ENCODE measurements at regions of chr16 and their contacts with region 1.

Region 1: GRCh38 chr16:27920391-27920891 is 143.1 kb downstream of the GSG1L start:
- DNase-seq: peak; percentile 52
- H3K4me3 ChIP-seq: no peak overlapping the region
- H3K27ac ChIP-seq: no peak overlapping the region
- H3K4me1 ChIP-seq: peaks cover 8% of the 10 kb centered on the region
- H3K27me3 ChIP-seq: no peaks in the 10 kb centered on the region
- CTCF ChIP-seq: peak; percentile 59 to 66

Region 2: DNA sequence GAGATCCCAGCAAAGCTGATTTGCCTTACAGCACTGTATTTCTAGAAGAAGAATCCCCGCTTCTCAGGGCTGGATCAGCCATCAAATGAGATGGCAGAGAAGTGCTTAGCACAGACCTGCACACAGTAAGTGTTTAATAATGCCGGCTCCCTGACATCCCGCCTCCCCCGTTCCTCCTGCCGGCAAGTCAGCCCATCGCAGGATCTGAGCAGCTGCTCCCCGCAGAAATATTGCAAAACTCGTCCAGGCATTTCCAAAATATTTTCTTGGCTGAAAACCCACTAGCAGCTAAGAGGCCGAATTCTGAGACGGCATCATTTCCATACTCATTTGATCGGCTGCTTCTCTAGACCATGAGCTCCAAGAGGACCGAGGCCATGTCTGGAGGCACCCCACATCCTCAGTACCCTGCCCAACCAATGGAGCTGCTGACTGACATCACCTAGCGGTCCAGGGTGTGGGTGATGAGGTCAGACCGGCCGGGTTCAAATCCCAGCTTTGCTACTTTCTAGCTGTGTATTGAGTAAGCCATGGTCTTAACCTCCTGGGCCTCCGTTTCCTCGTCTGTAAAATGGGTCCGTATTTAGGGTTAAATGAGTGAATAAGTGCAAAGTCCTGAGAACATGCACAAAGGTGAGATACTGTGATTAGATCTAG is 119.0 kb before region 1 on chr16:
- CTCF ChIA-PET with region 1: no interaction called
- dilution Hi-C with region 1: no loop called
- in situ Hi-C with region 1: no loop called
- intact Hi-C with region 1: no loop called
- DNase-seq: no peak
- H3K4me3 ChIP-seq: no peak overlapping the region
- H3K27ac ChIP-seq: no peak overlapping the region
- H3K4me1 ChIP-seq: no peaks in the 10 kb centered on the region
- H3K27me3 ChIP-seq: peaks cover 5% of the 10 kb centered on the region
- CTCF ChIP-seq: no peak

Region 3: GRCh38 chr16:28025631-28026030 is 105.2 kb after region 1 on chr16:
- CTCF ChIA-PET with region 1: no interaction called
- dilution Hi-C with region 1: loop called (anchors 5 kb)
- in situ Hi-C with region 1: no loop called
- intact Hi-C with region 1: no loop called
- DNase-seq: no peak
- H3K4me3 ChIP-seq: no peak overlapping the region
- H3K27ac ChIP-seq: no peak overlapping the region
- H3K4me1 ChIP-seq: no peaks in the 10 kb centered on the region
- H3K27me3 ChIP-seq: no peaks in the 10 kb centered on the region
- CTCF ChIP-seq: no peak

Measured in mammary epithelial cell (primary cell).